ENCODE measurements at regions of chr22 and their contacts with region 1.

Region 1: GRCh38 chr22:36180038-36180880 is 19.7 kb upstream of the APOL3 start:
- DNase-seq: no peak
- H3K4me3 ChIP-seq: no peak overlapping the region
- H3K27me3 ChIP-seq: peaks cover 1% of the 10 kb centered on the region; the same call in 1 of the 2 replicates
- CTCF ChIP-seq: peak; percentile 93

Region 2: DNA sequence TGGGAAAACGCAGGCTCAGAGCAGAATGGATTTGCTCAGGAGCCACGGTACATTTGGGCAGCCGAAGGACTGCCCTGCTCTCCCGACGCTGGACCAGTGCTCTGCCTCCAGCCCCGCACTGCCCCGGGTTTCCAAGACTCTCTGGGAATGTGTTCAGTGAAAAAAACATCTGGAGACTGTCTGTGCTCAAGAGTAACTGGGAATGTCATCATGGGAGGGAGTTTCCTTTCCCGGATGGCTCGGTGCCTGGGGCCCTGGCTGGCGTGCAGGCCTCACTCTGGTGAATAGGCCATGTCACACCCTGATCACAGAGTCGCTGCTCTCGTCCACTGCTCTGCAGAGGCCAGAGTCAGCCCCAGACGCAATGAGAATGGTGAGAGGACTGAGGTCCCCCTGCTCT is 541.8 kb before region 1 on chr22:
- CTCF ChIA-PET with region 1: no interaction called
- POLR2A ChIA-PET with region 1: interaction called, 10 read pairs
- DNase-seq: peak; percentile 85
- H3K4me3 ChIP-seq: no peak overlapping the region
- H3K27me3 ChIP-seq: no peaks in the 10 kb centered on the region
- CTCF ChIP-seq: no peak

Region 3: GRCh38 chr22:36144886-36145541 is 35.2 kb before region 1 on chr22:
- CTCF ChIA-PET with region 1: interaction called, 166 read pairs
- POLR2A ChIA-PET with region 1: no interaction called
- DNase-seq: no peak
- H3K4me3 ChIP-seq: no peak overlapping the region
- H3K27me3 ChIP-seq: peaks cover 3% of the 10 kb centered on the region
- CTCF ChIP-seq: peak; percentile 86

Region 4: GRCh38 chr22:36156515-36157419 is 23.5 kb before region 1 on chr22:
- CTCF ChIA-PET with region 1: interaction called, 25 read pairs
- POLR2A ChIA-PET with region 1: no interaction called
- DNase-seq: peak; percentile 45
- H3K4me3 ChIP-seq: peak overlapping the region; percentile 33
- H3K27me3 ChIP-seq: no peaks in the 10 kb centered on the region; the same call in 1 of the 2 replicates
- CTCF ChIP-seq: no peak

Region 5: DNA sequence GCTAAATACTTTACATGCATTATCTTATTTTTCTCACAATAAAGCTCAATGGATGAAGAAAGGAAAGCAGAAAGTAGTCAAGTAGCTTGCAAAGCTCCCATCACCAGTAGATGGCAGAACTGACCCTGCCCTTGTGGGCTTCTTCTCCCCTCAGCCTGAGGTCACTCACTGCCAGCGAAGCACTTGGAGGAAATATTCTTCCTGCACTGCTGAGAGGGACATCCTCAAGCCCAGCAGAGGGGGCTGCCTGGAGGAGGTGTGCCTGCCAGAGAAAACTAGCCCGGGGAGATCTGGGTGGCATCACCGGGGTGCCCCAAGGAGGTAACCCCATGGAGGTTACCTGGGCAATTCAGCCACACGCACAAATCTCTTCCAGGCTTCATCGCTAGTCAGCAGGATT is 14.7 kb after region 1 on chr22:
- CTCF ChIA-PET with region 1: interaction called, 20 read pairs
- POLR2A ChIA-PET with region 1: no interaction called
- DNase-seq: no peak
- H3K4me3 ChIP-seq: no peak overlapping the region
- H3K27me3 ChIP-seq: no peaks in the 10 kb centered on the region; the same call in 1 of the 2 replicates
- CTCF ChIP-seq: peak; percentile 83

Region 6: DNA sequence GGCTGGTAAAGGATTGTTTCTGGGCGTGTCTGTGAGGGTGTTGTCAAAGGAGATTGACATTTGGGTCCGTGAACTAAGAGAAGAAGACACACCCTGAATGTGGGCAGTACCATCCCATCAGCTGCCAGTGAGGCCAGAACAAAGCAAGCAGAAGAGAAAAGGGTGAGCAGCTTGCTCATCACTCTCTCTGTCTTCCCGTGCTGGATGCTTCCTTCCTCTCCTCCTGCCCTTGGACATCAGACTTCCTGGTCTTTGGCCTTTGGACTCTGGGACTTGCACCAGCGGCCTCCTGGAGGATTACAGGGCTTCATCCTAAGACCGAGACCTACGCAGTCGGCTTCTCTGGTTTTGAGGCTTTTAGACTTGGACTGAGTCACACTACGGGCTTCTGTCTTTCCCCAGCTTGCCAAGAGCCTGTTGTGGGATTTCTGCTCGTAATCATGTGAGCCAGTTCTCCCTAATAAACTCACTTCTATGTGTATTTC is 40.2 kb after region 1 on chr22:
- CTCF ChIA-PET with region 1: no interaction called
- POLR2A ChIA-PET with region 1: no interaction called
- DNase-seq: no peak
- H3K4me3 ChIP-seq: no peak overlapping the region
- H3K27me3 ChIP-seq: peaks cover 18% of the 10 kb centered on the region
- CTCF ChIP-seq: no peak

Measured in BJ (cell line).